ENCODE measurements at regions of chr2 and their contacts with region 1.

Region 1: DNA sequence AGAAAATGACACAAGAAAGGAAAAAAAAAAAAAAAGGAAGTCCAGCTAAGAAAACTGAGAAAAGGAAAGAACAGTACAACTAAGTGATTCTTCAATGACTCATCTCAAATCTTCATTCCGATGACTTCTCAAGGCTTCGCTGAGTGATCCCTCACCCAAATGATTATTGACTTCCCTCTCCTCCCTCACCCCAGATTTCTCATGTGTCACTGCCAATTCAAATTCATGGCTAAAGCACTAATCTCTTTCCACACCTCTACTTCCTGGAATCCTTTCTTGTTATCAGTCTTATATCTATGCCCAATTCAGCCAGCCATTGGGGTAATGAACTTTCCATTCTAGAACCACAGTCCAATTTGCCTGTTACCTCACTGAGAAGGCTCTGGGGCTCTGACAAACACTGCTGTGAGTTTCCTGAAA is 7.2 kb upstream of the ABCB11 start:
- DNase-seq: peak; percentile 54
- H3K4me3 Mint-ChIP-seq: no peak overlapping the region
- H3K27ac Mint-ChIP-seq: peak overlapping the region; percentile 87
- H3K4me1 Mint-ChIP-seq: peaks cover 63% of the 10 kb centered on the region
- H3K27me3 Mint-ChIP-seq: no peaks in the 10 kb centered on the region
- CTCF ChIP-seq: no peak

Region 2: GRCh38 chr2:168816369-168816768 is 222.0 kb before region 1 on chr2:
- CTCF ChIA-PET with region 1: interaction called, 8 read pairs
- intact Hi-C with region 1: loop called (anchors 1 kb)
- DNase-seq: peak; percentile 65
- H3K4me3 Mint-ChIP-seq: peak overlapping the region; percentile 14
- H3K27ac Mint-ChIP-seq: peak overlapping the region; percentile 78
- H3K4me1 Mint-ChIP-seq: peaks cover 57% of the 10 kb centered on the region
- H3K27me3 Mint-ChIP-seq: no peaks in the 10 kb centered on the region
- CTCF ChIP-seq: no peak

Region 3: DNA sequence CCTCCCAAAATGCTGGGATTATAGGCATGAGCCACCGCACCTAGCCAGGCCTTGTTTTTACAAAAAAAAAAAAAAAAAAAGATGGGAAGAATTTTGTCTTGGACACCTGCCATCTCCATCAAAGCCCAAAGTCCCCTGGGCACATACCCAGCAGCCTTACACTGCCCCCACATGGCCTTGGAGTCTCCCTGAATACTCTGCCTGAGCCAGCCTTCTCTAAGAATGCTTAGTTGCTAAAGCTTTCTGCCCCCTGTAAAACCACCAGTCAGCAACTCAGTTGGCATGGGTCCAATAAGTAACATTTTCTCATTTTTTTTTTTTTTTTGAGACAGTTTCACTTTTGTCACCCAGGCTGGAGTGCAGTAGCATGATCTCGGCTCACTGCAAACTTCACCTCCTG is 188.7 kb before region 1 on chr2:
- CTCF ChIA-PET with region 1: interaction called, 3 read pairs
- intact Hi-C with region 1: loop called (anchors 1 kb)
- DNase-seq: peak; percentile 87
- H3K4me3 Mint-ChIP-seq: no peak overlapping the region
- H3K27ac Mint-ChIP-seq: peak overlapping the region; percentile 14
- H3K4me1 Mint-ChIP-seq: peaks cover 33% of the 10 kb centered on the region
- H3K27me3 Mint-ChIP-seq: no peaks in the 10 kb centered on the region
- CTCF ChIP-seq: peak; percentile 67

Region 4: DNA sequence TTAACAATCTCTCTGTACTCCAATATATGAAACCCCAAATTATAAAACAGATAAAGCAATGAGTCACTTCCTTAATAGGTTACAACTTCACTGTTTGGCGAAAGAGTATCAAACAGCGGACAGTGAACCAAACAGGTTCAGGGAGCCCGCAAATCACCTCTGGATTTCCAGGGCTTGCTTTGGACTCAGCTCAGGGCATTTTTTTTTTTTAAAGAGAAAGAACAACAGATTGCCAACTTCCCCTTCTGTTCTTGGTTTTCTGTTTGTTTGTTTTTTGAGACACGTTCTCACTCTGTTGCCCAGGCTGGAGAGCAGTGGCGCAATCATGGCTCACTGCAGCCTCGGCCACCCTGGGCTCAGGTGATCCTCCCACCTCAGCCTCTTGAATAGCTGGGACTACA is 59.9 kb before region 1 on chr2:
- CTCF ChIA-PET with region 1: interaction called, 8 read pairs
- intact Hi-C with region 1: loop called (anchors 1 kb)
- DNase-seq: peak; percentile 77
- H3K4me3 Mint-ChIP-seq: no peak overlapping the region
- H3K27ac Mint-ChIP-seq: peak overlapping the region; percentile 45
- H3K4me1 Mint-ChIP-seq: peaks cover 42% of the 10 kb centered on the region
- H3K27me3 Mint-ChIP-seq: no peaks in the 10 kb centered on the region
- CTCF ChIP-seq: no peak

Region 5: GRCh38 chr2:169131587-169132512 is 93.5 kb after region 1 on chr2:
- CTCF ChIA-PET with region 1: interaction called, 3 read pairs
- intact Hi-C with region 1: loop called (anchors 1 kb)
- DNase-seq: peak; percentile 34
- H3K4me3 Mint-ChIP-seq: no peak overlapping the region
- H3K27ac Mint-ChIP-seq: no peak overlapping the region
- H3K4me1 Mint-ChIP-seq: no peaks in the 10 kb centered on the region
- H3K27me3 Mint-ChIP-seq: no peaks in the 10 kb centered on the region
- CTCF ChIP-seq: peak; percentile 74